ENCODE measurements at regions of chr11 and their contacts with region 1.

Region 1: DNA sequence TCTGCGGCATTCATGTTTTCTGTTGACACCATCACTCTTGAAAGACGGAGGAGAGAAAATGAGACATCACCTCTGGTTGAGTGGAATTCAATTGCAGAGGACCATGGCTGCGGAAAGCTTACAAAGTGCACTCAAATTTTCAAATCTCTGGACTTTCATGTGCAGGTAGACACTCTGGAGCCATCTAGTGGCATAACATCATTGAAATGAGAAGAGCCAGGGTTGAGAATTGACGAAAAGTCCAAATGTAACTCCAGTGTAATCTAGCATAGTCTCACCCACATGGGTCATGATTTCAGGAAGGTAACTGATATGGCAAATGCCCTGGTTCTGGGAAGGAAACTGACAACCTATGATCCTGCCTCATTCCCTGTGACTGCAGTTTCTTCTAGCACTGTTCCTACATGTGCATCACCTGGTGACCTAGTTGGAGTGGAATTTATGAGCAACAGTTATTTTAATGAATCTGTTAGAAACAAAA is 687.8 kb downstream of the KCNA4 start:
- DNase-seq: no peak
- ATAC-seq: peak; percentile 63
- H3K4me3 ChIP-seq: no peak overlapping the region
- H3K27ac ChIP-seq: no peak overlapping the region
- H3K4me1 ChIP-seq: peaks cover under 1 to 1% of the 10 kb centered on the region in 2 donors
- H3K27me3 ChIP-seq: no peaks in the 10 kb centered on the region

Region 2: GRCh38 chr11:28836285-28837081 is 492.5 kb before region 1 on chr11:
- intact Hi-C with region 1: loop called in 1 of 2 experiments (anchors 10 kb)
- DNase-seq: no peak
- ATAC-seq: peak; percentile 19
- H3K4me3 ChIP-seq: no peak overlapping the region
- H3K27ac ChIP-seq: peak overlapping the region; percentile 82 to 89
- H3K4me1 ChIP-seq: peaks cover 2% of the 10 kb centered on the region in 2 donors
- H3K27me3 ChIP-seq: no peaks in the 10 kb centered on the region

Region 3: DNA sequence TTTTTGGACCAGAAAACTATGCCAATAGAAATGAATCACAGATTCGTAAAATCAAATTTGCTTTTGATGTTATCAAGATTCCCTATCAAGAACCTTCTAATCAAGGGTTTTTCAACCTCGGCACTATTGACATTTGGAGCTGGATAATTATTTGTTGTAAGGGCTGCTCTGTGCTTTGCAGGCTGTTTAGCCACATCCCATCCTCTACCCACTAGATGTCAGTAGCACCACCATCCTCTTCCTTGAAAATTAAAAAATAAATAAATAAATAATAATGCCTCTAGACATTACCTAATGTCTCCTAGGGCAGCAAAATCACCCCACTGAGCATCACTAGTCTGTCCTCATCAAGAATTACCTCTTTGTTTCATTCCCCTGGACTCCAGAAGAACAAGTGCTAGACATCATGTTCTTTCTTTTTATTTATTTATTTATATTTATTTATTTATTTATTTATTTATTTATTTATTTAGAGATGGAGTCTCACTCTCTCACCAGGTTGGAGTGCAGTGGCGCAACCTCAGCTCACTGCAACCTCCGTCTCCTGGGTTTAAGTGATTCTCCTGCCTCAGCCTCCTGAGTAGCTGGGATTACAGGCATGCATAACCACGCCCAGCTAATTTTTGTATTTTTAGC is 56.9 kb before region 1 on chr11:
- intact Hi-C with region 1: loop called (anchors 5 kb)
- DNase-seq: no peak
- ATAC-seq: no peak
- H3K4me3 ChIP-seq: no peak overlapping the region
- H3K27ac ChIP-seq: no peak overlapping the region
- H3K4me1 ChIP-seq: no peaks in the 10 kb centered on the region
- H3K27me3 ChIP-seq: no peaks in the 10 kb centered on the region

Measured in aorta (tissue), 5 donors.